ENCODE measurements at regions of chr12 and their contacts with region 1.

Region 1: GRCh38 chr12:4526923-4527546 is 11.7 kb upstream of the RAD51AP1 start:
- DNase-seq: no peak
- ATAC-seq: no peak

Region 2: GRCh38 chr12:3885277-3886094 is 641.5 kb before region 1 on chr12:
- intact Hi-C with region 1: loop called (anchors 10 kb)
- DNase-seq: no peak
- ATAC-seq: peak; percentile 70

Region 3: GRCh38 chr12:4356041-4356327 is 171.1 kb before region 1 on chr12:
- intact Hi-C with region 1: loop called (anchors 10 kb)
- DNase-seq: no peak
- ATAC-seq: no peak

Region 4: DNA sequence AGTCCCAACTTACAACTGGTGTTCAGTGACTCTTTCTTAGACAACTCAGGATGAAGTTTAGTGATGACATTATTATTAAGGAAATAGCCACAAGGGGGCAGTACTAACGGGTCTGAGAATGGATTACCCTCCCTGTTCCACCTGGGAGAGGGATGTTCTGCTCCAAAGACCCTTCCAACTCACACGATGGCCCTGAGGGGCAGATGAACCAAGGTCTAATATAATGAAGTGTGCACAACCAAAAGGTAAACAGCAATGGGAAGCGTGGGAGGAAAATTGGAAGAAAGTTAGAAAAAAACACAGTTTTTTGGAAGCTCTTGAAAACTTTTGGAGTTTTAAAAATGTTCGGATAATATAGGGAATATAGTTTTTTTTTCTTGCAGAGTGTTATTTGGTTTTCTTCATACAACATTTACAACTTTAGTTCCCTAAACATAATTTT is 105.4 kb before region 1 on chr12:
- intact Hi-C with region 1: loop called (anchors 5 kb)
- DNase-seq: no peak
- ATAC-seq: peak; percentile 58

Measured in Right ventricle myocardium superior (tissue), 1 donor.